Activated CD4-positive, alpha-beta T cell treated with anti-CD3 and anti-CD28 coated beads for 36 hours (primary cell): ENCODE measurements at regions of chr12 and their contacts with region 1.

Region 1: DNA sequence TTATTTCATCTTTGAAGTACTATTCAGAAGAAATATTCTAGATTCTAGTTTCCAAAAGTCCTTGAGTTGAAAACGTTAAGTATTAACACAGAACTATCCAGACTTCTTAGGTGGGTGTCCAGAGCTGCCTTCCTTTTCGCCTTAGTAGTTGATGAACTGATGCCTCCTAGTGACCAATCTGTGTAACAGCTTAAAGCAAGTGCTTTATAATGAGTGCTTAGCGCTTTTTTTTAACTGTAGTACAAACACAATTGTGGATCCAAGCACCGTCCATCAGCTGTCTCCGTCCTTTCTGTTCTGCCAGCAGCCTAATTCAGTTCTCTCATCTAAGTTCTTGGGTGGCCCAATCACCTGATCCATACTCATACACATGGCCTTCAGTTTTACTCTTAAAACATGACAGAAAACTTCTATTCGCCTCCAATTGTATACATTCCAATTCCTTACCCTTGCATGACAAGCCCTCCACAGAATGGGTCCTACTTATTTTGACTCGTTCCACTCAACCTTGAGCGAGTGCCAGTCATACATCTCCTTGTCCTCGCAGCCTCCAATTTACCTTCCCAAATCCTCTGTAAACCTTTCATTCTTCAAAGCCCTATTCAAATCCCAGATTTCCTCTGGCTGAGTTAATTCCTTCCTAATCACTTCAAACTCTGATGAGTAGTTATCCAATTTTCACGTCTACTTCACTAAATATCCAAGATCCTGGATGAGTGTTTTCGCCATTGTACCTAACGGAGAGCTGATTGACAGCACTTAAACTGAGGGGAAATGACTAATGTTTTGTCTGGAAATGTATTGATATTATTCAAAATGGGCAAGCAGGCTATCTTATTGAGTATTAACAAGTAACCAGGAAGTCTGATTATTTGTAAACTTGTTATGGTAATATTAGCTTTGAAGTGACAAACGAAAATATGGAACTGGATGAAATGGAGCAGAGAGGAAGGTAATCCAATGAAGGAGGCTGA is 5.8 kb upstream of the PHLDA1 start:
- DNase-seq: peak; percentile 38
- ATAC-seq: peak; percentile 68
- H3K4me3 Mint-ChIP-seq: no peak overlapping the region
- H3K27ac Mint-ChIP-seq: no peak overlapping the region
- H3K4me1 Mint-ChIP-seq: peaks cover 22% of the 10 kb centered on the region
- H3K27me3 Mint-ChIP-seq: no peaks in the 10 kb centered on the region

Region 2: GRCh38 chr12:75334384-75335030 is 702.9 kb before region 1 on chr12 and contains the start of gene GLIPR1L1:
- CTCF ChIA-PET with region 1: no interaction called
- POLR2A ChIA-PET with region 1: no interaction called
- intact Hi-C with region 1: loop called (anchors 5 kb)
- DNase-seq: peak; percentile 91
- ATAC-seq: peak; percentile 82
- H3K4me3 Mint-ChIP-seq: peak within 1 kb of the TSS; percentile 61
- H3K27ac Mint-ChIP-seq: no peak within 1 kb of the TSS
- H3K4me1 Mint-ChIP-seq: peaks cover 25% of the 10 kb centered on the region
- H3K27me3 Mint-ChIP-seq: peaks cover 21% of the 10 kb centered on the region
- total RNA-seq, gene GLIPR1L1: not detected

Region 3: DNA sequence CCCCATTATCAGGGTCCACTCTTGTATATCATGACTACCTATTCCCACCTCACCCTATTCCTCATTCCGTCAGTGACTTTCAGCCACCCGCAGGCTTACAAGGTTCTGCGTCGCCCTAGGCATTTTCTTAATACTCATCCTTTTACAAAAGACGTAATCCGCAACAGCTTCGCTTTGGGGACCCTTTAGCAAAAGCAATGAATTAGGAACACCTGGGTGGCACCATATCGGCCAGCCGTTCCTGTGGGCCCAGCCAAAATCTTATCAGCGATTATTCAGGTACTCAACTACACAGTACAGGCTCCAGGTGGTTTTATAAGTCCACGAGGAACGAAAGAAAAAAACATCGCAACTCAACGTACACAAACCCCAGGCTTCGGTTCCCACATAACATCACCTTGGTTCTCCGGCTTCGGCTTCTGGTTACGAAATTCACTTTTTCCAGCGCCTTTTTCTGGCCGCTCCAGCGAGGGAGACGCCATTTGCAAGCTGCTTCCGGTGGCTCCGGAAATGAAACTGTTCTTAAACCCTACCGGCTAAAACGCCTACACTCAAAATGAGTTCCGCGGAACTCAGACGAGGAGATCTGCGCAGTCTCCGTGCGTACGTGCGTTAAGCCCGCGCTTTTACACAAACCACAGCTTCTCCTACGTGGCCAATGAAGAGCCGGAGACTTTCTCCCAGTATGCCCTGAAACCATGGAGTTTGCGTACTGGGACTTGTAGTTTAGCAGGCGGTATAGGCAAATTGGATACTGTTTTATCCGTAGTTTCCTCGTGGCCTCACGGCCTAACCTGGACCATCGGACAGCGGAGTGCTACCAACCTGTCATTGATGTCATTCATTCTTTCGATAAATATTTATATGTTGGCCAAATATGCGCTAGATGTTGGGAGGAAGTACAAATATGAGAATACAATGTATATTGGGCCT is 526.0 kb before region 1 on chr12 and contains the start of gene KRR1:
- CTCF ChIA-PET with region 1: interaction called, 3 read pairs
- POLR2A ChIA-PET with region 1: interaction called, 3 read pairs
- intact Hi-C with region 1: loop called (anchors 1 to 2 kb)
- DNase-seq: peak; percentile 94
- ATAC-seq: peak; percentile 96
- H3K4me3 Mint-ChIP-seq: peak within 1 kb of the TSS; percentile 100
- H3K27ac Mint-ChIP-seq: peak within 1 kb of the TSS; percentile 99
- H3K4me1 Mint-ChIP-seq: peaks cover 33% of the 10 kb centered on the region
- H3K27me3 Mint-ChIP-seq: no peaks in the 10 kb centered on the region
- total RNA-seq, gene KRR1: 122 to 147 TPM

Region 4: GRCh38 chr12:75526655-75527511 is 510.5 kb before region 1 on chr12:
- CTCF ChIA-PET with region 1: interaction called, 11 read pairs
- POLR2A ChIA-PET with region 1: interaction called, 15 read pairs
- intact Hi-C with region 1: loop called (anchors 1 kb)
- DNase-seq: peak; percentile 35
- ATAC-seq: peak; percentile 69
- H3K4me3 Mint-ChIP-seq: no peak overlapping the region
- H3K27ac Mint-ChIP-seq: no peak overlapping the region
- H3K4me1 Mint-ChIP-seq: peaks cover 6% of the 10 kb centered on the region
- H3K27me3 Mint-ChIP-seq: peaks cover 27% of the 10 kb centered on the region

Region 5: GRCh38 chr12:75816897-75817296 is 220.5 kb before region 1 on chr12:
- CTCF ChIA-PET with region 1: interaction called, 11 read pairs
- POLR2A ChIA-PET with region 1: no interaction called
- intact Hi-C with region 1: loop called (anchors 1 to 2 kb)
- DNase-seq: no peak
- ATAC-seq: peak; percentile 87
- H3K4me3 Mint-ChIP-seq: no peak overlapping the region
- H3K27ac Mint-ChIP-seq: no peak overlapping the region
- H3K4me1 Mint-ChIP-seq: peaks cover 11% of the 10 kb centered on the region
- H3K27me3 Mint-ChIP-seq: peaks cover 3% of the 10 kb centered on the region